Ovary (tissue), 10 donors: ENCODE measurements at regions of chr1 and their contacts with region 1.

Region 1: GRCh38 chr1:171984850-171985485 is 143.7 kb downstream of the DNM3 start:
- DNase-seq: no peak
- H3K4me3 ChIP-seq: no peak overlapping the region
- H3K27ac ChIP-seq: no peak overlapping the region
- H3K4me1 ChIP-seq: no peaks in the 10 kb centered on the region
- H3K27me3 ChIP-seq: peaks cover 2% of the 10 kb centered on the region
- CTCF ChIP-seq: peak; percentile 33 to 71 (median 45)
- EP300 ChIP-seq: no peak
- POLR2A ChIP-seq: no peak

Region 2: GRCh38 chr1:171644805-171645483 is 340.0 kb before region 1 on chr1:
- intact Hi-C with region 1: loop called in 2 of 4 experiments (anchors 5 to 10 kb)
- DNase-seq: peak; percentile 69 to 86 (median 76)
- H3K4me3 ChIP-seq: no peak overlapping the region
- H3K27ac ChIP-seq: peak overlapping the region; percentile 28 to 54
- H3K4me1 ChIP-seq: peaks cover 8% of the 10 kb centered on the region
- H3K27me3 ChIP-seq: no peaks in the 10 kb centered on the region
- CTCF ChIP-seq: peak; percentile 46 to 77 (median 57)
- EP300 ChIP-seq: no peak
- POLR2A ChIP-seq: no peak

Region 3: GRCh38 chr1:171801487-171801891 is 183.5 kb before region 1 on chr1:
- intact Hi-C with region 1: loop called (anchors 2 to 10 kb)
- DNase-seq: peak in 1 of 5 donors; percentile 25
- H3K4me3 ChIP-seq: no peak overlapping the region
- H3K27ac ChIP-seq: no peak overlapping the region
- H3K4me1 ChIP-seq: no peaks in the 10 kb centered on the region
- H3K27me3 ChIP-seq: no peaks in the 10 kb centered on the region
- CTCF ChIP-seq: peak; percentile 35 to 59 (median 45)
- EP300 ChIP-seq: no peak
- POLR2A ChIP-seq: no peak

Region 4: GRCh38 chr1:171913385-171913784 is 71.6 kb before region 1 on chr1:
- intact Hi-C with region 1: no loop called
- DNase-seq: no peak
- H3K4me3 ChIP-seq: no peak overlapping the region
- H3K27ac ChIP-seq: no peak overlapping the region
- H3K4me1 ChIP-seq: no peaks in the 10 kb centered on the region
- H3K27me3 ChIP-seq: no peaks in the 10 kb centered on the region
- CTCF ChIP-seq: no peak
- EP300 ChIP-seq: no peak
- POLR2A ChIP-seq: no peak